ENCODE measurements at regions of chr2 and their contacts with region 1.

Region 1: DNA sequence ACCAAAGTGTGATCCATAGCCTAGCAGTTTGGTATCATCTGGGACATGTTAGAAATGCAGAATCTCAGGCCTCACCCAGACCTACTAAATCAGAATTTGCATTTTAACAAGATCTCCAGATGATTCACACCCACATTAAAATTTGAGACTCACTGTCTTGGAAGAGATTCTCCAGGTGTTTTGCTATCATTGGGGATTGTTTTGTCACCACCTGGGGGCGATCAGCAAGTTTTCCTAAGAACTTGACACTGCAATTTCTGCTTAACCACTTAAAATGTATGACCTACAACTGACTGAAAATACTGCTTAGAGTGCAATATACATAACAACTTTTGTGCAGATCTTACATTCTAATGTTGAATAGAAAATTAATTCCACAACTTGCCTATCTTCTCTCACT is 18.9 kb upstream of the ITGA4 start:
- DNase-seq: no peak
- H3K4me3 Mint-ChIP-seq: no peak overlapping the region
- H3K27ac Mint-ChIP-seq: no peak overlapping the region
- H3K4me1 Mint-ChIP-seq: peaks cover 24% of the 10 kb centered on the region
- H3K27me3 Mint-ChIP-seq: no peaks in the 10 kb centered on the region

Region 2: DNA sequence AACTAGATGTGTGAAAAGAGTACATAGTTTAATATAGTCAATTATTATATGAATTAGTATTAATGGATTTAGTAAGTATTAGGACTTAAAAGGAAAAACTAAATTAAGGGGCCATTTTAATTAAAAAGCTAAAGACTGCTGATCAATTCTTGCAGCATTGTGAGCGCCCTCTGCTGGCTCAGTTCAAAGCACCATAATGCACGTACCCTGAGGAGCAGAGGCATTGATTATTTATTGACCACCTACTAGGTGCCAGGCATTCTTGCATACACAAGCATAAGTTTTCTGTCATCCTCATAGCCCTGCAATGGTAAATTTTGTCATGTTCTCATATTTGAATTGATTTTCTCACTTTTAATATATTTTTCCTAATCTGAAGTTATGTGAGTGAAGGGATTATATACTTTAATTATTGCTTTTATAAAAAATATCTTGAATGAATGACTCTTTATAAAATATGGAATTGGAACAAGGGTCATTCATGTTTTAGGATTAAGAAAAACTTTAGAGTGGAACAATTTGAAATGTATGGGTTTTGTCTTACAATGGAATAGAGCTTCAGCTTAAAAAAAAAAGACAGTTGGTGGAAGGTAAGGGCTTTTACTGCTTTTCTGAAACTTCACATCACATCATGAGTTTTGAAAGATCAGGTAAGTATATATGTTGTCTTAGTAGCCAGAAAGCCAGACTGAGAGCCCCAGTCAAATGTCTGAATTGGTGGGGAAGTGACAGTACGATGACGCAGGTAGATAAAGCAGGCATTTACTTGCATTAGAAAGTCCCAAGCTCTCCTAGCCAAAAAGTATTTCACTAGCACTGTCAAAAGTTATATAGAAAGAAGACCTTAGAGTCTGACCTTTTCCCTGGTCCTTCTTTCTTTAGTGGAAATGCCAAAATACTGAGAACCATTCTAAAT is 28.7 kb after region 1 on chr2:
- intact Hi-C with region 1: loop called (anchors 1 kb)
- DNase-seq: peak; percentile 56
- H3K4me3 Mint-ChIP-seq: no peak overlapping the region
- H3K27ac Mint-ChIP-seq: peak overlapping the region; percentile 30
- H3K4me1 Mint-ChIP-seq: peaks cover 87% of the 10 kb centered on the region
- H3K27me3 Mint-ChIP-seq: no peaks in the 10 kb centered on the region

Measured in activated T-helper 1 cell treated with anti-CD3 and anti-CD28 coated beads, Interleukin-12 subunit alpha, Interleukin-12 subunit beta, Interleukin-2, Interleukin-4 antibody, amounts not matched to agents 30 ng/mL and 10 ng/mL and 1 ng/mL, durations not matched to agents 14 hours and 24 hours and 36 hours (primary cell).